Common myeloid progenitor, CD34-positive (primary cell): ENCODE measurements at regions of chr16 and their contacts with region 1.

Region 1: GRCh38 chr16:3087243-3088235 is 11.6 kb downstream of the ZSCAN10 start:
- DNase-seq: peak in 2 of 3 donors; percentile 26 to 47
- H3K4me3 ChIP-seq: peak overlapping the region in 5 of 7 experiments; percentile 25 to 62 (median 47)
- H3K27ac ChIP-seq: no peak overlapping the region
- H3K4me1 ChIP-seq: peaks cover 9 to 62% (median 41%) of the 10 kb centered on the region in 4 experiments
- H3K27me3 ChIP-seq: no peaks in the 10 kb centered on the region

Region 2: GRCh38 chr16:2963723-2964474 is 123.6 kb before region 1 on chr16 and contains the start of gene KREMEN2:
- CTCF ChIA-PET with region 1: no interaction called
- POLR2A ChIA-PET with region 1: no interaction called
- DNase-seq: no peak
- H3K4me3 ChIP-seq: peak within 1 kb of the TSS in 6 of 7 experiments; percentile 42 to 66 (median 54)
- H3K27ac ChIP-seq: no peak within 1 kb of the TSS
- H3K4me1 ChIP-seq: peaks cover 0 to 59% (median 44%) of the 10 kb centered on the region in 4 experiments
- H3K27me3 ChIP-seq: peaks cover 0 to 71% (median 31%) of the 10 kb centered on the region in 5 experiments

Region 3: DNA sequence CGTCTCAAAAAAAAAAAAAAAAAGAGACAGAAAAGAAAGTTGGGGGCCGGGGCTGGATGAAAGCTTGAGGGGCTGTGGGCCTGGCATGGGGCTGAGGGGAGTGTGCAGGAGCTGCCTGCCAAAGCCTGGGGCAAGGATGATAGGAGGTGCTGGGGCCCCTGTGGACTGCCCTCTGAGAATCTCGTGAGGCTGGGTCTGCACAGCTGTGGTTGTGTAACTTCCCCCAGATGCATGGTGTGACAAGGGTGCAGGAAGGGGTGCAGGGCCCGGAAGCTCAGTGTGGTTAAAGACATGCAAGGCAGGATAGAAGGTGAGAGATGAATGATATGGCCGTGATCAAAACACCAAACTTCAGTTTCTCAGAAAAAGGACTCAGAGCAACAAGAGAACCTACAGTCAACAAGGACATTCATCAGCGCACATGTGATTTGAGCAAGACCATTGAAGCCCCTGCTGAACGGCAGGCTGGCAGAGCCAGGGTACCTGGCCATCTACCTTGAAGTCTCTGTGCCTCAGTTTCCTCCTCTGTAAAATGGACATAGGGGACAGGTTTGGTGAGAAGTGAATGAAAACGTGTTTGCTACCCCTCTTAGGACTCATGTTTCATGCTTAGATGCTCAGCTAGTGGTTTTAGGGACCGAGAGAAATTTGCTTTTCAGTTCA is 12.5 kb before region 1 on chr16:
- CTCF ChIA-PET with region 1: interaction called, 54 read pairs
- POLR2A ChIA-PET with region 1: interaction called, 7 read pairs
- DNase-seq: peak; percentile 82 to 98 (median 94)
- H3K4me3 ChIP-seq: peak overlapping the region in 5 of 7 experiments; percentile 9 to 53 (median 15)
- H3K27ac ChIP-seq: peak overlapping the region; percentile 56 to 64
- H3K4me1 ChIP-seq: peaks cover 0 to 63% (median 43%) of the 10 kb centered on the region in 4 experiments
- H3K27me3 ChIP-seq: no peaks in the 10 kb centered on the region